ENCODE measurements at regions of chr16 and their contacts with region 1.

Region 1: DNA sequence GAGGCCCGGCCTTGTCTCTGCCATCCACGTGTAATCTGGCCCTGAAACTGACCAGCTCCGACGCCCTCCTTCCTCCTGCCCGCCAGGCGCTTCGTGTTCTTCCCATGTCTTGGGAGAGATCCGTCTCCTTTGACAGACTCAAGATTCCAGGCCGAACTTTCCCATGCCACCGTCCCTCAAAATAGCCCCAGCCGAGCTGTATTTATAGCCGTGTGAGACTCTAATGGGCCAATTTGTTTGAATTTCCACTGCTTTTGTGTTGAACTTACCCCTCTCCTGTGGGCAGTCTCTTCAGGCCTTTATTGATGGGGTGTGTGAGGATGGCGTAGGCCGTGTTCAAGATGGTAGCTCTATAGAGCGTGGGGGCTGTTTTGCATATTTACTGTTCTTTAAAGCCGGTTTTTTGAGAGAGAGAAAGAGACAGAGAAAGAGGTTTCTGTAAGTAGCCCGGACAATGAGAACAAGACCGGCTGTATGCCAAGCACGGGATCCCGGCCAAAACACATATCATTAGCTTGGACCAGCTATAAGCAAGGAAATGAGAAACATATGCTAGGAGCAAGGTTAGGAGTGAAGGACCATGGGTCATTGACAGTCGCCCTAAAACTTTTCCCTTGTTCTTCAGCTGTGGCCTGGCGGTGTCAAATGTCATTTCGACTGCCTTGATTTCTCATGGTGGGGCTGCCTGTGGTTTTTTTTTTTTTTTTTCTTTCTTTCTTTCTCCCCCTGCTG is 124.5 kb upstream of the ZFHX3 start:
- DNase-seq: no peak
- ATAC-seq: peak; percentile 49
- H3K4me3 Mint-ChIP-seq: peak overlapping the region; percentile 33
- H3K27ac Mint-ChIP-seq: peak overlapping the region; percentile 86; the same call in 1 of the 2 replicates
- H3K4me1 Mint-ChIP-seq: peaks cover 50% of the 10 kb centered on the region
- H3K27me3 Mint-ChIP-seq: peaks cover 19% of the 10 kb centered on the region
- CTCF ChIP-seq: no peak

Region 2: GRCh38 chr16:73095885-73096421 is 76.5 kb before region 1 on chr16:
- CTCF ChIA-PET with region 1: interaction called, 11 read pairs
- POLR2A ChIA-PET with region 1: no interaction called
- DNase-seq: peak; percentile 20
- ATAC-seq: peak; percentile 71
- H3K4me3 Mint-ChIP-seq: no peak overlapping the region
- H3K27ac Mint-ChIP-seq: no peak overlapping the region
- H3K4me1 Mint-ChIP-seq: no peaks in the 10 kb centered on the region
- H3K27me3 Mint-ChIP-seq: no peaks in the 10 kb centered on the region
- CTCF ChIP-seq: no peak

Region 3: DNA sequence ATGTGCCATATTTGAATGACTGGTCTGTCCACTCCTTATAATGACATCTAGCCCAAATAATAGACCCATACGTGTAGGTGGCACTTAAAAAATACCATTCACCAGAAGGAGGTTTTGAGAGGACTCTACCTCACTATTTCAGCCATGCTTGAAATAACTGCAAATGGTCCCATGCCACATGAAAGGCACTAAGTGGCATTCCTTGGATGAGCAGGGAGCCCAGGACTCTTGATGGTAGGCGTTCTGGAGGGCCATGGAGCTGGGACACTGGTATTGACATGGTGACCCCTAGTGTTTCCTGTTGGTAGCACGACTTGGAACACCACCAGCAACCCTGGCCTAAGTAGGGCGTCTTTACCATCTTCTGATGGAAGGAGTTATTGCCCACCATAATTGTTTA is 24.3 kb after region 1 on chr16:
- CTCF ChIA-PET with region 1: interaction called, 12 read pairs
- POLR2A ChIA-PET with region 1: no interaction called
- DNase-seq: peak; percentile 73
- ATAC-seq: peak; percentile 99
- H3K4me3 Mint-ChIP-seq: no peak overlapping the region
- H3K27ac Mint-ChIP-seq: no peak overlapping the region
- H3K4me1 Mint-ChIP-seq: peaks cover 5% of the 10 kb centered on the region
- H3K27me3 Mint-ChIP-seq: peaks cover 14% of the 10 kb centered on the region
- CTCF ChIP-seq: peak; percentile 45

Measured in WTC11 (cell line).